Posterior vena cava (tissue), 2 donors: ENCODE measurements at regions of chr1 and their contacts with region 1.

Region 1: GRCh38 chr1:176837708-176838107 is 326.8 kb downstream of the ASTN1 start:
- DNase-seq: no peak

Region 2: DNA sequence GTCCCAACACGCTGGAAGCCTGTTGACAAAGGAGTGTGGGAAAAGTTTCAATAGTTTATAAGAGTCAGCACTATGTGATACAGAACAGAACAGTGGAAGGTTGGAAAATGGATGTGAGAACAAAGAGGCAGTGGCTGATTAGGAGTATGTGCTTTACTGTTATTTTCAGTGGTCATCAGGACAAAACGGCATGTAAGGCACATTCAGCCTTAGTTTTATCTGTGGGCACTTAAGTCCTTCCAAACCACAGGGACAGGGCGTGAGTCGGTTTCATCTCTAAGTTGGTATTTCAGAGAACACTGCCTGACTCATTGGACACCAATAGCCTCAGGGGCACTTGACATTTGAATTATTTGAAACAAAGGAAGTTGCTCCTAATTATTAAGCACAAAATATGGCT is 19.9 kb after region 1 on chr1:
- intact Hi-C with region 1: loop called in 1 of 2 experiments (anchors 1 kb)
- DNase-seq: no peak